Activated CD4-positive, alpha-beta T cell treated with anti-CD3 and anti-CD28 coated beads for 36 hours (primary cell): ENCODE measurements at regions of chr5 and their contacts with region 1.

Region 1: GRCh38 chr5:180605554-180606214 is 14.4 kb upstream of the SCGB3A1 start:
- DNase-seq: peak; percentile 85
- ATAC-seq: peak; percentile 74
- H3K4me3 Mint-ChIP-seq: no peak overlapping the region
- H3K27ac Mint-ChIP-seq: no peak overlapping the region
- H3K4me1 Mint-ChIP-seq: no peaks in the 10 kb centered on the region
- H3K27me3 Mint-ChIP-seq: no peaks in the 10 kb centered on the region

Region 2: DNA sequence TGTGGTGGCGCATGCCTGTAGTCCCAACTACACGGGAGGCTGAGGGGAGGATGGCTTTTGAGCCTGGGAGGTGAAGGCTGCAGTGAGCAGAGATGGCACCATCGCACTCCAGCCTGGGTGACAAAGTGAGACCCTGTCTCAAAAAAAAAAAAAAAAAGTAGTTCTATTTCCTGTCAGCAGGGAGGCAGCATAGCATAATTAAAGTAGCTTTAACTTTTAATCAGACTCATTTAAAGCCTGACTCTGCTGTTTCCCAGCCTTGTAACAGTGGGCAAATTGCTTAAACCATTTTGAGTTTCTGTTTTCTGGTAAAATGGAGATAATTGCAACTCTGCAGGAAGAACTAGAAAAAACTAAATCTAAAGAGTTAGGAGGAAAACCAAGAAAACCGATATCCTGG is 80.3 kb before region 1 on chr5:
- CTCF ChIA-PET with region 1: interaction called, 4 read pairs
- POLR2A ChIA-PET with region 1: no interaction called
- intact Hi-C with region 1: loop called in 1 of 2 experiments (anchors 1 kb)
- DNase-seq: no peak
- ATAC-seq: no peak
- H3K4me3 Mint-ChIP-seq: no peak overlapping the region
- H3K27ac Mint-ChIP-seq: no peak overlapping the region
- H3K4me1 Mint-ChIP-seq: peaks cover 56% of the 10 kb centered on the region
- H3K27me3 Mint-ChIP-seq: no peaks in the 10 kb centered on the region

Region 3: GRCh38 chr5:180575571-180575970 is 30.1 kb before region 1 on chr5:
- CTCF ChIA-PET with region 1: interaction called, 11 read pairs
- POLR2A ChIA-PET with region 1: no interaction called
- intact Hi-C with region 1: no loop called
- DNase-seq: no peak
- ATAC-seq: peak; percentile 49
- H3K4me3 Mint-ChIP-seq: no peak overlapping the region
- H3K27ac Mint-ChIP-seq: no peak overlapping the region
- H3K4me1 Mint-ChIP-seq: peaks cover 12% of the 10 kb centered on the region
- H3K27me3 Mint-ChIP-seq: no peaks in the 10 kb centered on the region

Region 4: DNA sequence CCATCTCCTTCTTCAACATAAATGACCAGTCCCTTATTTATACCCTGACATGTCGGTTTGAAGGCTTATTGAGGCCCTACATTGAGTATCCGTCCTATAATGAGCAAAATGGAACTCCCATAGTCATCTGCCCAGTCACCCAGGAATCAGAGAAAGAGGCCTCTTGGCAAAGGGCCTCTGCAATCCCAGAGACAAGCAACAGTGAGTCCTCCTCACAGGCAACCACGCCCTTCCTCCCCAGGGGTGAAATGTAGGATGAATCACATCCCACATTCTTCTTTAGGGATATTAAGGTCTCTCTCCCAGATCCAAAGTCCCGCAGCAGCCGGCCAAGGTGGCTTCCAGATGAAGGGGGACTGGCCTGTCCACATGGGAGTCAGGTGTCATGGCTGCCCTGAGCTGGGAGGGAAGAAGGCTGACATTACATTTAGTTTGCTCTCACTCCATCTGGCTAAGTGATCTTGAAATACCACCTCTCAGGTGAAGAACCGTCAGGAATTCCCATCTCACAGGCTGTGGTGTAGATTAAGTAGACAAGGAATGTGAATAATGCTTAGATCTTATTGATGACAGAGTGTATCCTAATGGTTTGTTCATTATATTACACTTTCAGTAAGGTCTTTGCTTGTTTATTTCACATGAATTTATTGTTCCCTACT is 344.7 kb after region 1 on chr5:
- CTCF ChIA-PET with region 1: no interaction called
- POLR2A ChIA-PET with region 1: no interaction called
- intact Hi-C with region 1: no loop called
- DNase-seq: no peak
- ATAC-seq: no peak
- H3K4me3 Mint-ChIP-seq: no peak overlapping the region
- H3K27ac Mint-ChIP-seq: no peak overlapping the region
- H3K4me1 Mint-ChIP-seq: peaks cover 3% of the 10 kb centered on the region
- H3K27me3 Mint-ChIP-seq: peaks cover 2% of the 10 kb centered on the region